Activated CD4-positive, alpha-beta memory T cell treated with anti-CD3 and anti-CD28 coated beads, Interleukin-2, amount 10 ng/mL, durations not matched to agents 7 days and 5 days (primary cell): ENCODE measurements at regions of chr11 and their contacts with region 1.

Region 1: DNA sequence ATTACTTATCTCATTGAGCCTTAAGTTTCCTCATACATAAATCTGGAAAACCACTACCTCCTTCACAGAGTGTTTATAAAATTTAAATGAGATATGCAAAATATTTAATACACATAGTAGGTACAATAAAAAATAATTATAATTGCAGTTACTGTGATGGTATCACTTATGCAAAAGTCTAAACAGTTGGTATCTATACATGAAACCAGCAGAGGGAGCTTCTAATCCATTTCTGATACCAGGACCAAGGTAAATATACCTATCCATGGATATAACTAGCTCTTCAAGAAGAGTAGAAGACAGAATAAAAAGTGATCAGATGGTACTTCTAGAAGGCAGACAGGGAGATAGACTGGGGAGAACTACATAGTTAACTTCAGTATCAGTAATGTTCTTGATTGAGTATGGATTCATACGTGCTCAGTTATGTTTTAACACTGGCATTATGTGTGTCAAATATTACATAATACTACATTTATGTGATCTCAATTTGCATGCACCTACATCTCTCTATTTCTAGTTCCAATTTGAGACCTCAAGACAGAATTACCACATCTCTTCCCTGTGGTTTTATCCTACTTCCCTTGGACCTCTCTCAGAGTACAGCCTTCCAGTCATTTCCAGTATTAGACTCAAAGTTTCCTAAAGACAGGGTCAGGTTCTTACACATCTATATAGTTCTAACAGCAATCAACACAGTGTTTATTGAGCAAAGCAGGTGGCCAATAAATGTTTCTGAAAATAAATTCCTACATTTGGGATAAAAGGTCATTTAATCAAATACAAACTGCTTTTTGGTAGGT is 13.7 kb upstream of the TSG101 start:
- DNase-seq: no peak
- H3K4me3 Mint-ChIP-seq: no peak overlapping the region
- H3K27ac Mint-ChIP-seq: no peak overlapping the region
- H3K4me1 Mint-ChIP-seq: peaks cover 1% of the 10 kb centered on the region
- H3K27me3 Mint-ChIP-seq: no peaks in the 10 kb centered on the region

Region 2: GRCh38 chr11:18501629-18502028 is 38.8 kb before region 1 on chr11:
- CTCF ChIA-PET with region 1: no interaction called
- POLR2A ChIA-PET with region 1: no interaction called
- DNase-seq: no peak
- H3K4me3 Mint-ChIP-seq: no peak overlapping the region
- H3K27ac Mint-ChIP-seq: no peak overlapping the region
- H3K4me1 Mint-ChIP-seq: no peaks in the 10 kb centered on the region
- H3K27me3 Mint-ChIP-seq: no peaks in the 10 kb centered on the region

Region 3: DNA sequence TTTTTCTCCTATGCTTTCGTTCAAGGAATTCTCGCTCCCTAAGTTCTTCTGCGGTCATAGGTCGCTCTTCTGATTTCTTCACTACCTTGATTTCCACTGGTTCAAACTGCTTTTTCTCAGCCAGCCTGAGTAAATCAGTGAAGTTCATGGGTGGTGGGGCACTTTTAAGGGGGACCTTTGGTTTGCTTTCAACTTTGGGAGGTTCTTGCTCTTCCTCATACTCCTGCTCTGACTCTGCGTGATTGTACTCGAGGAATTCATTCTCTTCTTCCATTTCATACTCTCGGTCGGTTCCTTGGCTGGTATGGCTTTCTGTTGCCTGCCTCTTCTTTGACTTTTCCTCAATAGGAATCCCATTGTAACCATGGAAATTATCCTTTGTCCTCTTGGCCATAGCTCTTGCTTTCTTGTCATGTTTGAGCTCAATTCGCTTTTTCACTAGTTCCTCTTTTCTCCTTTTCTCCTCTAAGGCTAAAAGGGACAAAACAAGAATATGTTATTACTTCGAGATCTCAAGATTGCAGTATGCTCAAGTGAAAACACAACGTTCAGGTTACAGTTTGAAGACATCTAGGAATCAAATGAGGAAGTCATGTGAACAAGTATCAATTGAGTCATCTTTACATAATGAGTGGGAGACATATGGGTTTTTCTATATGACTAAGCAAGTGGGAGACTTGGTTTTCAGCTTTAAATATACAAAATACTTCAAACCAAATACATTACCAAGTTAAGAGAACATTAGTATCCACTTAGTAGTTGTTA is 75.4 kb after region 1 on chr11:
- CTCF ChIA-PET with region 1: interaction called, 11 read pairs
- POLR2A ChIA-PET with region 1: interaction called, 3 read pairs
- DNase-seq: no peak
- H3K4me3 Mint-ChIP-seq: peak overlapping the region; percentile 12
- H3K27ac Mint-ChIP-seq: peak overlapping the region; percentile 57
- H3K4me1 Mint-ChIP-seq: peaks cover 52% of the 10 kb centered on the region
- H3K27me3 Mint-ChIP-seq: no peaks in the 10 kb centered on the region

Region 4: GRCh38 chr11:18650859-18651557 is 110.6 kb after region 1 on chr11:
- CTCF ChIA-PET with region 1: interaction called, 51 read pairs
- POLR2A ChIA-PET with region 1: interaction called, 6 read pairs
- DNase-seq: peak; percentile 62
- H3K4me3 Mint-ChIP-seq: no peak overlapping the region
- H3K27ac Mint-ChIP-seq: no peak overlapping the region
- H3K4me1 Mint-ChIP-seq: peaks cover 14% of the 10 kb centered on the region
- H3K27me3 Mint-ChIP-seq: no peaks in the 10 kb centered on the region

Region 5: DNA sequence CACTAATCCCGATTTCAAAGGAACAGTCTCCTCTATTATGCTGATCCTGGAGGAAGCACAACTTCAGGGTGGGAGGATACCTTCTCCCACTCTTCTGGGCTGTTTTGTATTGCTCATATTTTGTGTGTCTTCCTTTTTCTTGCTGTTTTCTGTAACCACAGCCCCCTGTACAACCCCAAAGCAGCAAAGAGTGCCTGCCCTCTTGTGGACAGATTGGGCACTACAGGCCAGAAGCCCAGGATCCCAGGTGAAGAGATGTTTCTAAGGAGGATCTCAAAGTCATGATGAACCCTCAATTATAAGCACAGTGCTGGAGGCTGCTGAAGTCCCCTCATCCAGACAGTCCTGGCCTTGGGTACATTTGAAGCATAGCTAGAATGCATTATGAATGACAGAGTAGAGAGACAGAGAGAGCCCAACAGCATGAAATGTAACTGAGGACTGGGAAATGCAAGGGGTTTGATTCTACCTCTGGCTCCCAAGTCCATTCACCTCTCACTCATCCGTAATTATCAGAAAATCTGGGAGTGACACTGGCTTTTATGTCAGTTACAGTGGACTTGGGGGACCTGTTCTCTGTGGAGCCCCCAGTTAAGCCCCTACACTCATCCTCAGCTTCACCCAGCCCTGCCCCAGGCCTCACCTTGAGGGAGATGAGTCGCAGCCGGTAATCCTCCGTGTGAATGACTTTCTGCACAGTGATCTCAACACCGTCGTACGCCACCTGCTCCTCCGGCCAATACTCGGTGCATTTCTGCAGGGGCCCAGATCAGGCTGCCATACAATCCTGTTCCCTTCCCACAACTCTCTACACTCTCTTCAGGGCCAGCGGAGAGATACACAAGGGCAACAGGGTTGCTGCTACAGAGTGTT is 191.8 kb after region 1 on chr11:
- CTCF ChIA-PET with region 1: interaction called, 33 read pairs
- POLR2A ChIA-PET with region 1: no interaction called
- DNase-seq: peak; percentile 70
- H3K4me3 Mint-ChIP-seq: no peak overlapping the region
- H3K27ac Mint-ChIP-seq: no peak overlapping the region
- H3K4me1 Mint-ChIP-seq: peaks cover 5% of the 10 kb centered on the region
- H3K27me3 Mint-ChIP-seq: peaks cover 2% of the 10 kb centered on the region

Region 6: DNA sequence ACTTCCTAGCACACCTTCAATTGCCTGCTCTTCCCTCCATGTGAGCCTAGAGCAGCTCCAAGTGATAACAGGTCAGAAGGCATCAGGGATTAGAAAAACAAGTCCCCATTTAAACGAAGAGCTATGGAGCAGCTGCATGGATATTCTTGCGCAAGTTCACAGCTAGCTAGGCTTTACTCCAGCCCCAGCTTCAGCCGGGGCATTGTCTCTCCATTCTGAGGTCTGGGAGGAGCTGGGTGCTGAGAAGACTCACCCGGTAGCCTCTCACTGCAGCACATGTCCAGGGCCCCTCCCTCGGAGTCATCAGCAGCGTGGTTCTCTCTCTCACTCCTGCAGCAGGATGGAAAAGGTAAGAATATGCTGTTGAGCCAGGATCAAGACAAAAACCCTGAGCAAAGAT is 225.1 kb after region 1 on chr11:
- CTCF ChIA-PET with region 1: interaction called, 14 read pairs
- POLR2A ChIA-PET with region 1: interaction called, 3 read pairs
- DNase-seq: no peak
- H3K4me3 Mint-ChIP-seq: no peak overlapping the region
- H3K27ac Mint-ChIP-seq: no peak overlapping the region
- H3K4me1 Mint-ChIP-seq: peaks cover 35% of the 10 kb centered on the region
- H3K27me3 Mint-ChIP-seq: peaks cover 7% of the 10 kb centered on the region